CD14-positive monocyte (primary cell): ENCODE measurements at regions of chr3 and their contacts with region 1.

Region 1: GRCh38 chr3:151146071-151146730 is 56.8 kb downstream of the GPR171 start:
- DNase-seq: peak; percentile 67 to 83 (median 78)
- H3K4me3 ChIP-seq: peak overlapping the region in 1 of 3 experiments; percentile 43
- H3K4me3 Mint-ChIP-seq: no peak overlapping the region
- H3K27ac ChIP-seq: peak overlapping the region in 1 of 2 donors; percentile 47
- H3K27ac Mint-ChIP-seq: peak overlapping the region in 1 of 7 donors; percentile 17
- H3K4me1 ChIP-seq: peaks cover 12 to 14% of the 10 kb centered on the region in 2 donors
- H3K4me1 Mint-ChIP-seq: no peaks in the 10 kb centered on the region
- H3K27me3 ChIP-seq: no peaks in the 10 kb centered on the region
- H3K27me3 Mint-ChIP-seq: peaks cover 0 to 4% (median 4%) of the 10 kb centered on the region in 3 donors
- CTCF ChIP-seq: peak; percentile 90

Region 2: GRCh38 chr3:149382091-149382467 is 1764.1 kb before region 1 on chr3:
- intact Hi-C with region 1: no loop called
- DNase-seq: no peak
- H3K4me3 ChIP-seq: no peak overlapping the region
- H3K4me3 Mint-ChIP-seq: no peak overlapping the region
- H3K27ac ChIP-seq: no peak overlapping the region
- H3K27ac Mint-ChIP-seq: no peak overlapping the region
- H3K4me1 ChIP-seq: peaks cover 18 to 23% of the 10 kb centered on the region in 2 donors
- H3K4me1 Mint-ChIP-seq: peaks cover 31% of the 10 kb centered on the region
- H3K27me3 ChIP-seq: no peaks in the 10 kb centered on the region
- H3K27me3 Mint-ChIP-seq: peaks cover 0 to 10% (median 0%) of the 10 kb centered on the region in 3 donors
- CTCF ChIP-seq: no peak

Region 3: DNA sequence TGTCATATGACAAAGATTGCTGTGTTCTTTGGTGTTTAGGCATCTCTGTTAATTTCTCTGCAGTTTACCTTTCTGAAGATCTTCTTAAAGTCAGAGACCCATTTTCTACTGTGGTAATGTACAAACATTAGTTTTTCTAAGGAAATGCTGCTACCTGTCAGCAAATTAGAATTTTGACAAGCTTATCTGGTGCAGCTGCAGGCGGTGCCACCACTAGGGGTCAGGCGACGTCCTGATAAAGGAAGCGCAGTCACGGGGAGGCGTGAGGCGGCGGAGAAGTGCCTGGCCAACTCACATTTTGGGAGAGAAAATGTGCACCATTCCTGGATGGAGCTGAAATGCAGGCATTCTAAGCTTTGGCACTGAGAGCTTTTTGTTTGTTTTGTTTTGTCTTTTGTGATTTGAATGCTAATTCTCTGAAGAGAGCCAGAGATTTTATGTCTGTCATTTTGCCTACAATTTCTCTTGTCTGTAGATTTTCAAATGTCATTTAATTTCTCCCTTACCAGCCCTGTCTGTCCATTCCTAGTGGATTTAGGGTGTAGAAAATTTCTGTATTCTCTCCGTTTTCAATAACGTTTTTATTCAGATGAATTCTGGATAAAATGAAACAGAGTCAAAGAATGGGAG is 358.3 kb before region 1 on chr3:
- intact Hi-C with region 1: loop called (anchors 5 to 10 kb)
- DNase-seq: peak; percentile 65 to 76 (median 76)
- H3K4me3 ChIP-seq: no peak overlapping the region
- H3K4me3 Mint-ChIP-seq: no peak overlapping the region
- H3K27ac ChIP-seq: no peak overlapping the region
- H3K27ac Mint-ChIP-seq: no peak overlapping the region
- H3K4me1 ChIP-seq: no peaks in the 10 kb centered on the region
- H3K4me1 Mint-ChIP-seq: peaks cover 3% of the 10 kb centered on the region
- H3K27me3 ChIP-seq: peaks cover 3% of the 10 kb centered on the region in 2 donors
- H3K27me3 Mint-ChIP-seq: peaks cover 6 to 9% (median 7%) of the 10 kb centered on the region in 3 donors
- CTCF ChIP-seq: peak; percentile 94

Region 4: DNA sequence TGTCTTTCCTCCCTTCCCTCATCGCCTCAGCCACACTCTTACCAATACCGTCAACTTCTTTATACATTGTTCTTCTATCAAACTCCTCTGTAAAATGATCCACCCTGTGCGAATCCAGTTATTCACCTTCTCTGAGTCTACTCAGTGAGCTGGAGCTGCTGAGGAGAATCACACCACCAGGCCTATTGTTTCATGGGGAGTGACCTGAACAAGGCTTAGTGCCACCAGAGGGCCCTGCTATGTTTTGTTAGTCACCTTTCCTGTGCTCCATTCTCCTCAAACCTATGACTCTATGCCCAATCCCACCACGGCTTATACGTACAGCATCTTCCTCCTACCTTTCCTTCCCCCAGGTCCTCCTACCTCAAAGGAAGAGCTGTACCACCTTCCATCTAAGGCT is 111.1 kb before region 1 on chr3:
- intact Hi-C with region 1: no loop called
- DNase-seq: no peak
- H3K4me3 ChIP-seq: no peak overlapping the region
- H3K4me3 Mint-ChIP-seq: no peak overlapping the region
- H3K27ac ChIP-seq: no peak overlapping the region
- H3K27ac Mint-ChIP-seq: no peak overlapping the region
- H3K4me1 ChIP-seq: no peaks in the 10 kb centered on the region
- H3K4me1 Mint-ChIP-seq: no peaks in the 10 kb centered on the region
- H3K27me3 ChIP-seq: no peaks in the 10 kb centered on the region
- H3K27me3 Mint-ChIP-seq: peaks cover 0 to 1% (median 0%) of the 10 kb centered on the region in 3 donors
- CTCF ChIP-seq: no peak